SK-N-SH (cell line): ENCODE measurements at regions of chr1 and their contacts with region 1.

Region 1: DNA sequence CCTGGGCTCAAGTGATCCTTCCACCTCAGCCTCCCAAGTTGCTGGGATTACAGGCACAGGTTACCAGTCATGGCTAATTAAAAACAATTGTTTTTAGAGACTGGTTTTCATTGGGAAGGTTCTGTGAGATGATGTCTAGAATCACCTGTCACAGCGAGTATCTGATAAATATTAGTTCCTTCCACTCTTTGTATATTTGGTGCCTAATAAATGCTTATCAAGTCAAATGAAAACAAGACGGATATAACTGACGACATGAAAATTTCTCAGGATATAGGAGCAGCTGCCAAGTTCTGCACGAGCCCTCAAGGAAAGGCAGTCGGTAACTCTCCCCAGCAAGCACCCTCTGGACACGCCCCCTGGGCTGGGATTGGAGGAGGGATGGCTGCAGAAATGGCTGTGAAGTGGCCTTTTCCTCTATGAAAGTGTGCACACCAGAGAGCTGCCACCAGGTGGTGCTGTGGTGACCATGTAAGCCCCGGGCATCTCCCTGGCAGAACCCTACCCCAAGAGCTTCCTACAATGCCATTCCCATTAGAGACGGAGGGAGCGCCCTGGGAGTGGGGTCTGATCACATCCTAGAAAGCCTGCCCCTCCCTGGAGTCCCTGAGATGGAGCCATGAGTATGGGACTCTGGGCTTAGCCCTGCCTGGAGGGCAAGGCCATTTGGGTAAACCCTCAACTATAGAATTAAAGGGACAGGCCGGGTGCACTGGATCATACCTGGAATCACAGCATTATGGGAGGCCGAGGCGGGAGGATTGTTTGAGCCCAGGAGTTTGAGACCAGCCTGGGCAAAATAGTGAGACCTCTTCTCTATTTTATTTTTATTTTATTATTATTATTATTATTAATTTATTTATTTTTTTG is 50.9 kb downstream of the HTR6 start:
- DNase-seq: peak; percentile 88
- H3K4me3 ChIP-seq: no peak overlapping the region
- H3K27ac ChIP-seq: no peak overlapping the region
- H3K4me1 ChIP-seq: peaks cover 0 to 1% of the 10 kb centered on the region in 2 experiments; a peak in 1 of 4 replicates
- H3K27me3 ChIP-seq: no peaks in the 10 kb centered on the region
- CTCF ChIP-seq: peak; percentile 93
- EP300 ChIP-seq: no peak
- RAD21 ChIP-seq: peak; percentile 78

Region 2: GRCh38 chr1:19661721-19662228 is 53.8 kb before region 1 on chr1:
- CTCF ChIA-PET with region 1: interaction called, 553 read pairs
- POLR2A ChIA-PET with region 1: no interaction called
- DNase-seq: no peak
- H3K4me3 ChIP-seq: no peak overlapping the region
- H3K27ac ChIP-seq: no peak overlapping the region
- H3K4me1 ChIP-seq: peaks cover 0 to 6% of the 10 kb centered on the region in 2 experiments; a peak in 1 of 4 replicates
- H3K27me3 ChIP-seq: no peaks in the 10 kb centered on the region; the same call in 1 of the 2 replicates
- CTCF ChIP-seq: peak; percentile 83
- EP300 ChIP-seq: no peak
- RAD21 ChIP-seq: peak; percentile 75

Region 3: DNA sequence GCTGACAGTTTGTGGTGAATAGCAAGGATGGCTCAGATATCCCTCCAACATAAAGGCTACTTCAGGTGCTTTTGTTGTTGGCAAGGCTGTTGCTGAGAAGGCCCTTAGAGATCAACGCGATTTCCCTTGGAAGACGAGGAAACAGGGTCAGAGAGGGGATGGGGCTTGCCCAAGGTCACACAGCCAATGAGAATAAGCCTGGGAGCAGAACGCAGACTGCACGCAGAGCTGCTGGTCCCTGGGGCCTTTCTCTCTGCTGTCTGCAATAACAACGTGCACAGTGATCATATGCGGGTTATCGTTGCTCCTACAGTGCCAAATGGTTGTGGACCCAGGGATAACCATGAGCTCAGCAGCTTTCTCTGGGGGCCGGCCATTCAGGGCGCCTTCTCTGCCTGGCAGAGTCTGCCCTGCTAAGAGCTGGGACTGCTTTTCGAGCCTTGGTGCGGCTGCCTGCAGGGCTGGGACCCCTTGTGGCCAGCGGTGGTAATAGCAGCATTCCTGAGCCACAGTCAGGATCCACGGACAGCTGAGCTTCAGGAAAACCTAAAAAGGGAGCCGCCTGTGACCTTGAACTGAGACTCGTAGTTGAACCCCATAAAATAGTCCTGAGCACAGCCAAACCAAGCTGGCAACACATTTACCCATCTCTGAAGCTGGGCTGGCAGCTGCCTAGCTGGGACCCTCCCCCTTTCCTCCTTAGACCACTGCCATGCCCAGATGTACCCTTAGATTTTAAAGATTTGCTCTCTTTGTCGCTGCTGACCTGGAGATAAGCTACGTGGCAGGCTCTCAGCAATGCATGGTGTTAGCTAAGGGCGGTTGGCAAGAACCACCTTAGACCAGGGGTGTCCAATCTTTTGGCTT is 11.1 kb before region 1 on chr1:
- CTCF ChIA-PET with region 1: interaction called, 43 read pairs
- POLR2A ChIA-PET with region 1: no interaction called
- DNase-seq: peak; percentile 84
- H3K4me3 ChIP-seq: peak overlapping the region in 1 of 2 experiments; percentile 24; a peak in 1 of 4 replicates
- H3K27ac ChIP-seq: no peak overlapping the region
- H3K4me1 ChIP-seq: peaks cover 0 to 6% of the 10 kb centered on the region in 2 experiments; a peak in 1 of 4 replicates
- H3K27me3 ChIP-seq: no peaks in the 10 kb centered on the region
- CTCF ChIP-seq: peak; percentile 89
- EP300 ChIP-seq: no peak
- RAD21 ChIP-seq: peak; percentile 73

Region 4: GRCh38 chr1:19728413-19729145 is 13.0 kb after region 1 on chr1:
- CTCF ChIA-PET with region 1: interaction called, 44 read pairs
- POLR2A ChIA-PET with region 1: no interaction called
- DNase-seq: no peak
- H3K4me3 ChIP-seq: no peak overlapping the region
- H3K27ac ChIP-seq: no peak overlapping the region
- H3K4me1 ChIP-seq: no peaks in the 10 kb centered on the region; a peak in 1 of 4 replicates
- H3K27me3 ChIP-seq: no peaks in the 10 kb centered on the region
- CTCF ChIP-seq: no peak
- EP300 ChIP-seq: no peak
- RAD21 ChIP-seq: no peak

Region 5: GRCh38 chr1:19737104-19737825 is 21.7 kb after region 1 on chr1:
- CTCF ChIA-PET with region 1: interaction called, 44 read pairs
- POLR2A ChIA-PET with region 1: no interaction called
- DNase-seq: no peak
- H3K4me3 ChIP-seq: no peak overlapping the region
- H3K27ac ChIP-seq: no peak overlapping the region
- H3K4me1 ChIP-seq: peaks cover 4 to 19% of the 10 kb centered on the region in 2 experiments; a peak in 3 of 4 replicates
- H3K27me3 ChIP-seq: no peaks in the 10 kb centered on the region
- CTCF ChIP-seq: no peak
- EP300 ChIP-seq: no peak
- RAD21 ChIP-seq: peak; percentile 23; the same call in 1 of the 2 replicates

Region 6: DNA sequence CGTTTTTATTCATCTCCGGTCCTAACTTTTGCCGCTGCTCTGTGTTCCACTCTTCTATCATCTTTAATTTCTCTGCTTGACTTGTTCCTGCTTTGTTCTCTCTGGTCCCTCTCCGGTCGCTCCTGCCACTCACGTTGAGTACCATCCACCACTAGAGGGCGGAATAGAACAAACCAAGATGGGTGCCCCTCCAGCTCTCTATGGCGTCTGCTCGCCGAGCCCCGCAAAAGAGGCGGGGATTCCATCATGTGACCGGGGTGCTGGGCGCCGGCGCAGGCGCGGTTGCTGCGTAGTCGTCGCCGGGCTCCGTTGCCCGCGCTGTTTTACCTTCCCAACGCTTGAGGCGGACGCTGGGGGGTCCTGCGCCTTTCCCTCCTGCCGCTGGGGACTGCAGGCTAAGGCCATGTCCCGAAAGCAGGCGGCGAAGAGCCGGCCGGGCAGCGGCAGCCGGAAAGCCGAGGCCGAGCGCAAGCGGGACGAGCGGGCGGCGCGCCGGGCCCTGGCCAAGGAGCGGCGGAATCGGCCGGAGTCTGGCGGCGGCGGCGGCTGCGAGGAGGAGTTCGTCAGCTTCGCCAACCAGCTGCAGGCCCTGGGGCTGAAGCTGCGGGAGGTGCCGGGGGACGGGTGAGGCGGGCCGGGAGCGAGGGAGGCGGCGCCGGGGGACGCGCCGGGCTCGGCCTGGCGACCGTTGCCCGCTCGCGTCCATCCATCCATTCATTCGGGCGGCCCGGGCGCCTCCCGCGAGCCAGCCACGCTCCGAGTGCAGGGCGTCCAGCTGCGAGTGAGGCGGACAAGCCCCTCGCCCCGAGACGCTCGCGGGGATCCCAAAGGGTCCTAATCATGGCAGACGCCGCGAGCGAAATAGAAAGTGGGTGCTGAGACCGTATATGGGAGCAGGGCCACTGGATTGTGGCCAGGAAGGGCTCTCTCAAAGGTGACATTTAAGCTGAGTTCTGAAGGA is 166.8 kb after region 1 on chr1 and contains the start of gene OTUD3:
- CTCF ChIA-PET with region 1: interaction called, 13 read pairs
- POLR2A ChIA-PET with region 1: interaction called, 3 read pairs
- DNase-seq: peak; percentile 97
- H3K4me3 ChIP-seq: peak within 1 kb of the TSS; percentile 77 to 97
- H3K27ac ChIP-seq: peak within 1 kb of the TSS; percentile 82 to 83
- H3K4me1 ChIP-seq: peaks cover 8% of the 10 kb centered on the region in 2 experiments; a peak in 2 of 4 replicates
- H3K27me3 ChIP-seq: no peaks in the 10 kb centered on the region
- CTCF ChIP-seq: peak; percentile 87
- EP300 ChIP-seq: no peak
- RAD21 ChIP-seq: peak; percentile 61
- polyA plus RNA-seq, gene OTUD3: 2.6 and 3.3 TPM in 2 replicates